ENCODE measurements at regions of chr7 and their contacts with region 1.

Region 1: GRCh38 chr7:120272261-120272660 is 714 bp upstream of the KCND2 start:
- DNase-seq: peak; percentile 27
- ATAC-seq: peak; percentile 63
- H3K4me3 ChIP-seq: peak overlapping the region; percentile 82
- H3K27ac ChIP-seq: peak overlapping the region; percentile 64; the same call in 1 of the 2 replicates
- H3K4me1 ChIP-seq: no peaks in the 10 kb centered on the region
- H3K27me3 ChIP-seq: no peaks in the 10 kb centered on the region
- CTCF ChIP-seq: peak; percentile 71 to 82 (median 75)
- EP300 ChIP-seq: no peak
- POLR2A ChIP-seq: no peak
- RAD21 ChIP-seq: peak; percentile 92

Region 2: DNA sequence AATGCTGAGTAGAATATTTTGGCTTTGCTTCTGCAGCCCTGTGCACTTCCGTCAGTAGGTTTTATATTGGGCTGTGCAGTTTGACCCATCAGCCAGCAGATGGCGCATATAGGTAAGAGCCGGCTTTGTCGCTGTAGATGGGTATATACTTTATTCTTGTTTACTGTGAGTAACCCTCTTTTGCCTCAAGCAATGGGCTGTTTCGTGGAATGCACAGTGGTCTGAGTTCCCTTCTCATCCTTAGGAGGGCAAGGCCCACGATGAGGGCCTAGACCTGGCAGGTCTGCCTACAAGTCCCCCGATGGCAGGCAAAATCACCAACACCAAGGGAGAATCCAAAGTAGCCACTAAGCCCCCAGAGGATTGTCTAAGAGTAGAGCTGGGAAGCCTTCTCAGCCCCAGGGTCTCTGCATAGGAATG is 1002.2 kb before region 1 on chr7:
- CTCF ChIA-PET with region 1: interaction called, 5 read pairs
- POLR2A ChIA-PET with region 1: no interaction called
- RAD21 ChIA-PET with region 1: no interaction called
- SMC1A ChIA-PET with region 1: interaction called, 3 read pairs
- in situ Hi-C with region 1: loop called (anchors 10 kb)
- intact Hi-C with region 1: loop called (anchors 1 kb)
- DNase-seq: no peak
- ATAC-seq: peak; percentile 98
- H3K4me3 ChIP-seq: no peak overlapping the region
- H3K27ac ChIP-seq: no peak overlapping the region
- H3K4me1 ChIP-seq: no peaks in the 10 kb centered on the region
- H3K27me3 ChIP-seq: no peaks in the 10 kb centered on the region
- CTCF ChIP-seq: peak; percentile 78 to 89 (median 87)
- EP300 ChIP-seq: no peak
- POLR2A ChIP-seq: no peak
- RAD21 ChIP-seq: peak; percentile 74

Region 3: DNA sequence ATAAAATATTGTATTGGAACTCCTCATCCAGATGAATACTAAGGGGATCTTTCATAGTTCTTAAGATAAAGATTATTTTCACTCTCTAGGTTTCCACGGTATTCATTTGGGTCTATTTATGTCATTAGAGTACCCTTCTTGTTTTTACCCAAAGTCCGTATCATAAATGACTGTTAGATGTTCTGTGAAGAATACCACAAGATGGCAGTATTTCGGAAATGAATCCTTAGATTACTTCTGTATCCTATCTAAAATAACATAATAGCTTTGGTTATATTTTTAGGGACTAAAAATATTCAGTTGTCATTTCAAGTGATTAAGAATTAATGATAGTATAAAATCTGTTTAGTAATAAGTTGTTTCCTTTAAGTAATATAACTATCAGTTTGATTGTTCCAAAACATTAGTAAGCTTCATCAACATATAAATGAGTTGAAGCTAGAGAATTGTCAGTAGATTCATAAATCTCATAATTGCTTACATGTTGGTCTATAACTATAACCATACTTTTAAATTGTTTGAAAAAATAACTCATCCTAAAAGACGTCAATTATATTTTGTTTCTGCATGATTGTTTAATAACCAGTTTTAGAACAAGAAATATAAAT is 336.7 kb before region 1 on chr7:
- CTCF ChIA-PET with region 1: interaction called, 22 read pairs
- POLR2A ChIA-PET with region 1: no interaction called
- RAD21 ChIA-PET with region 1: interaction called, 13 read pairs
- SMC1A ChIA-PET with region 1: interaction called, 11 read pairs
- in situ Hi-C with region 1: loop called (anchors 5 kb)
- intact Hi-C with region 1: loop called (anchors 1 kb)
- DNase-seq: no peak
- ATAC-seq: peak; percentile 85
- H3K4me3 ChIP-seq: no peak overlapping the region
- H3K27ac ChIP-seq: no peak overlapping the region
- H3K4me1 ChIP-seq: no peaks in the 10 kb centered on the region
- H3K27me3 ChIP-seq: peaks cover 0 to 1% of the 10 kb centered on the region in 2 experiments; a peak in 2 of 4 replicates
- CTCF ChIP-seq: peak in 2 of 3 experiments; percentile 31 to 32; a peak in 3 of 6 replicates
- EP300 ChIP-seq: no peak
- POLR2A ChIP-seq: no peak
- RAD21 ChIP-seq: peak; percentile 57

Measured in GM12878 (cell line).